RWPE1 (cell line): ENCODE measurements at regions of chr9 and their contacts with region 1.

Region 1: DNA sequence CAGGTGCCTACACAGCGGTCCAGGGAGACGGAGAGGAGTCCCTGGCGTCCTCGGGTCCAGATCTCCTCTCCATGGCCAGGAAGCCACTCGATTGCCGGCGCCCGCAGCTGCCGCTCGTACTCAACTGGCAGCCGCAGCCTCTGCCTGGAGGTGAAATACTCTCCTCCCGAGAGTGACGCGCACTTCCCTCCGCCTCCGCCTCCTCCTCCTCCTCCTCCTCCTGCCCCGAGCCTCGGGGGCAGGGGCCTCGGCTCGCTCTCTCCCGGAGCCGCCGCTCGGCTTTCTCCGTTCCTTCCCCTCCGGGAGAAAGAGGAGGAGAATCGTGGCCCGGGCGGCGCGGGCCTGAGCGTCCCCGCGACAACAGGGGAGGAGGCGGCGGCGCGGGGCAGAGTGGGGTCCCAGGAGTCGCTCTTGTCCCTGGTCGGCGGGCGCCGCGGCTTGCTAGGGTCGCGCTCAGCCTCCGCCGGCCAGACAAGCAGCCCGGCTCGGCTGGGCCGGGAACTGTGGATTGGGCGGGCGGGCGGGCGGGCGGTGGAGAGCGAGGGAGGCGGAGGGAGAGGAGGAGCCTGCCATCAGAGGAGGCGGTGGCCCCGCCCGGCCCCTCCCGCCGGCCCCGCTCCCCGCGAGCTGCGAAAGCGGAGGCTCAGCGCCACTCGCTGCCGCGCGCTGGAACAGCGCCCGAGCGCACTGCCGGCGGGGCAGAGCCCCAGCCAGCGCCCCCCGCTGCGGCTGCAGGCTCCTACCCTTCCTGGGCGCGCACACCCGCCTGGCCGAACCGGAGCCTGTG is at the start of gene CEMIP2:
- DNase-seq: peak; percentile 89
- H3K27ac ChIP-seq: peak within 1 kb of the TSS; percentile 88
- CTCF ChIP-seq: peak; percentile 61

Region 2: DNA sequence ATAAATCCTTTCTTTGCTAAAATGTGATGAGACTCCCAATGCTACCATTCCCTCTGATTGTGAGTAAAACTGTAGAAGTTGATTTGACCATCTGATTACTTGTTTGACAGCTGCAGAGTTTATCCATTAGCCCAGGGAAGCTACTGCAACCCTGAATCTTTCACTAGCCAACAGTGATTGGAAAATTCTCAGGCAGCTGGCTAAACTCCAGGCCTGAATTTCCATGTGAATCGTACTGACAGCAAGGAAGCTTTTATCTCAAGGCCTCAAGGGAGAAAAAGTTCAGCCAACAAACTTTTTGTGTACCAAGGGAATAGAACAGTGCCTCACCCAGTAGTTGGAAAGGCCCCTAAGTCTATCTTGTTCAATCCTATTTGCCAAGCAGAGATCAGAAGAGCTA is 400.4 kb before region 1 on chr9:
- CTCF ChIA-PET with region 1: interaction called, 12 read pairs
- POLR2A ChIA-PET with region 1: no interaction called
- DNase-seq: no peak
- H3K27ac ChIP-seq: no peak overlapping the region
- CTCF ChIP-seq: no peak

Region 3: DNA sequence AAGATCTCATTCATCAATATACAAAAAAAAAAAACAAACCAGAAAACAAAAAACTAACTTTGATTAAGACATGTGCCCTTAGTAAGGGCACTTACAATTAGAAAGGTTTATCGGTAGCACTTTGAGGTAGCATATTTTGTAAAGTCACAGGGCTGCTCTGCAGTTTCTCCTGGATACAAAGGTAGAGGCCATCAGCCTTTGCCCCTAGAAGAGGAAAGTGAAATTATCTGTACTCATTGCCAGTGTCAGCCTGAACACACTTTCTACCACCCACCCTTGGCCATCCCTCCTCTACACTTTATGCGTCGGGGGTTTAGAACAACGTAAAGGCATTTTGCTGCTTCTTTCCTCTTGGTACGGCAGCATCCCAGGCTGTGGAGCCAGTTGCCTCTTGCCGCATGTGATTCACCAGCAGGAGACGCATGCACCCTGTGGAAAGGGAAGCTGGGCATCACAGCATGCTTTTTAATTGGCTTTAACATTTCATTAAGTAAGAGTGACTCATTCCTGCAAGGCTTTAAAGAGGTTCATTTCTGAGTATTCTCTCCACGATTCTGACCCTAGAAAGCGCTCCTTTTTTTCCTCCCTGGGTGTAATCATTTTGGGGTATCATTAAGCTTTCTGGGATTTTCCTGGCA is 84.9 kb before region 1 on chr9:
- CTCF ChIA-PET with region 1: interaction called, 34 read pairs
- POLR2A ChIA-PET with region 1: interaction called, 6 read pairs
- DNase-seq: peak; percentile 70
- H3K27ac ChIP-seq: no peak overlapping the region
- CTCF ChIP-seq: peak; percentile 58